H1 (cell line): ENCODE measurements at regions of chr11 and their contacts with region 1.

Region 1: DNA sequence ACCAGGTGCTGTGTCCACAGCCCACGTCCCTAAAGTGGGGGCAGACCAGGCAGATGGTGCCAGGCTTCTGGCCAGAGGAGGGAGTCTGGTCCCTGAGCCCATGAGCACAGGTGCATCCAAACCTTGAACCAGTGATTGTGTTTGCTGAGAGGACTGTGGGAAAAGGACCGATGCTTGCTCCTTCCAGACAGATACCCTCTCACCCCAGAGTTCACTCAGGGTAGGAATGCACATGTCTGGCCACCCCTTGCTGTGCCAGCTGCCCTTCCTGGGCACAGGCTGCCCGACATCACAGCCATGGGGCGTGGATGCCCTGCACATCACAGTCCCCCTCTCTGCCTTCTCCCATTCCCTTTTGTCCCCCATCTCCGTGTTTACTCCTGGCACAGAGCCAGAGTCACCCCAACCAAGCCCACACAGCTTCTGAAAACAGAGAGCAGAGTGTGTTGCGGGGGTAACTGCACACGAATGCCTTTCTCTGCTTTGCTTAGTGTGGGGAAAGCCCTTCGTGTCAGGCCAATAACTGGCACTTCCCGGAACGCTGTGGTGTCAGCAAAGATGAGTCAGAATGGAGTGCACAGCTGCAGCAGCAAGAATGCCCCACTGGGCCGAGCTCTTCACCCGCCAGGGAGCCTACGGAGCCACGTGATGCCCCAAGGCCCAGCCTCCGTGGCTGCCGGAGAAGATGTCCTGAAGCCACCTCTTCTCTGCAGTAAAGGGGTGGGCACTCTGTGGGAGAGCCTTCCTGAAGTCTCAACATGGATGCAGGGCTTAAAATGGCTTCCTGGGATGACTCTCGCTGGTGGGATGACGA is 7.6 kb downstream of the CARS1 start:
- DNase-seq: no peak
- H3K4me3 ChIP-seq: no peak overlapping the region
- H3K27ac ChIP-seq: no peak overlapping the region
- H3K4me1 ChIP-seq: peaks cover 0 to 13% (median 6%) of the 10 kb centered on the region in 4 experiments; a peak in 5 of 7 replicates
- H3K27me3 ChIP-seq: no peaks in the 10 kb centered on the region
- CTCF ChIP-seq: no peak
- EP300 ChIP-seq: no peak
- POLR2A ChIP-seq: no peak
- RAD21 ChIP-seq: no peak

Region 2: GRCh38 chr11:2940147-2940546 is 109.5 kb before region 1 on chr11:
- CTCF ChIA-PET with region 1: no interaction called
- POLR2A ChIA-PET with region 1: no interaction called
- DNase-seq: no peak
- H3K4me3 ChIP-seq: no peak overlapping the region
- H3K27ac ChIP-seq: no peak overlapping the region
- H3K4me1 ChIP-seq: peaks cover 0 to 13% (median 5%) of the 10 kb centered on the region in 4 experiments; a peak in 6 of 7 replicates
- H3K27me3 ChIP-seq: no peaks in the 10 kb centered on the region
- CTCF ChIP-seq: no peak
- EP300 ChIP-seq: no peak
- POLR2A ChIP-seq: no peak
- RAD21 ChIP-seq: no peak

Region 3: GRCh38 chr11:3037040-3037944 is 12.3 kb before region 1 on chr11:
- CTCF ChIA-PET with region 1: interaction called, 92 read pairs
- POLR2A ChIA-PET with region 1: interaction called, 8 read pairs
- DNase-seq: peak; percentile 43 to 90
- H3K4me3 ChIP-seq: no peak overlapping the region
- H3K27ac ChIP-seq: no peak overlapping the region
- H3K4me1 ChIP-seq: no peaks in the 10 kb centered on the region
- H3K27me3 ChIP-seq: no peaks in the 10 kb centered on the region
- CTCF ChIP-seq: peak; percentile 64 to 92 (median 85)
- EP300 ChIP-seq: no peak
- POLR2A ChIP-seq: no peak
- RAD21 ChIP-seq: peak; percentile 87 to 89